IMR-90 (cell line): ENCODE measurements at regions of chr2 and their contacts with region 1.

Region 1: GRCh38 chr2:186841940-186842339 is 7.0 kb downstream of the ZSWIM2 start:
- DNase-seq: peak; percentile 81
- ATAC-seq: peak; percentile 90
- H3K4me3 ChIP-seq: no peak overlapping the region
- H3K27ac ChIP-seq: peak overlapping the region; percentile 73; the same call in 1 of the 2 replicates
- H3K4me1 ChIP-seq: peaks cover 2% of the 10 kb centered on the region; the same call in 1 of the 2 replicates
- H3K27me3 ChIP-seq: no peaks in the 10 kb centered on the region
- CTCF ChIP-seq: no peak
- POLR2A ChIP-seq: no peak
- RAD21 ChIP-seq: no peak

Region 2: GRCh38 chr2:186485871-186486650 is 355.9 kb before region 1 on chr2 and contains the start of gene ZC3H15:
- CTCF ChIA-PET with region 1: no interaction called
- POLR2A ChIA-PET with region 1: no interaction called
- dilution Hi-C with region 1: no loop called
- in situ Hi-C with region 1: no loop called
- intact Hi-C with region 1: loop called (anchors 5 kb)
- DNase-seq: peak; percentile 98
- ATAC-seq: peak; percentile 98
- H3K4me3 ChIP-seq: peak within 1 kb of the TSS; percentile 71
- H3K27ac ChIP-seq: peak within 1 kb of the TSS; percentile 93
- H3K4me1 ChIP-seq: peaks cover 2% of the 10 kb centered on the region; the same call in 1 of the 2 replicates
- H3K27me3 ChIP-seq: no peaks in the 10 kb centered on the region
- CTCF ChIP-seq: no peak
- POLR2A ChIP-seq: peak; percentile 97
- RAD21 ChIP-seq: peak; percentile 0; the same call in 1 of the 2 replicates
- total RNA-seq, gene ZC3H15: 22.9 and 65.0 TPM in 2 replicates

Region 3: GRCh38 chr2:186853951-186854350 is 12.0 kb after region 1 on chr2:
- CTCF ChIA-PET with region 1: no interaction called
- POLR2A ChIA-PET with region 1: no interaction called
- dilution Hi-C with region 1: no loop called
- in situ Hi-C with region 1: no loop called
- intact Hi-C with region 1: no loop called
- DNase-seq: peak; percentile 46
- ATAC-seq: no peak
- H3K4me3 ChIP-seq: no peak overlapping the region
- H3K27ac ChIP-seq: no peak overlapping the region
- H3K4me1 ChIP-seq: peaks cover 3% of the 10 kb centered on the region; the same call in 1 of the 2 replicates
- H3K27me3 ChIP-seq: no peaks in the 10 kb centered on the region
- CTCF ChIP-seq: no peak
- POLR2A ChIP-seq: no peak
- RAD21 ChIP-seq: no peak

Region 4: GRCh38 chr2:186919296-186919695 is 77.4 kb after region 1 on chr2:
- CTCF ChIA-PET with region 1: no interaction called
- POLR2A ChIA-PET with region 1: no interaction called
- dilution Hi-C with region 1: no loop called
- in situ Hi-C with region 1: no loop called
- intact Hi-C with region 1: no loop called
- DNase-seq: peak; percentile 82
- ATAC-seq: peak; percentile 91
- H3K4me3 ChIP-seq: no peak overlapping the region
- H3K27ac ChIP-seq: no peak overlapping the region
- H3K4me1 ChIP-seq: no peaks in the 10 kb centered on the region
- H3K27me3 ChIP-seq: no peaks in the 10 kb centered on the region
- CTCF ChIP-seq: no peak
- POLR2A ChIP-seq: no peak
- RAD21 ChIP-seq: no peak